CD8-positive, alpha-beta T cell (primary cell): ENCODE measurements at regions of chr16 and their contacts with region 1.

Region 1: DNA sequence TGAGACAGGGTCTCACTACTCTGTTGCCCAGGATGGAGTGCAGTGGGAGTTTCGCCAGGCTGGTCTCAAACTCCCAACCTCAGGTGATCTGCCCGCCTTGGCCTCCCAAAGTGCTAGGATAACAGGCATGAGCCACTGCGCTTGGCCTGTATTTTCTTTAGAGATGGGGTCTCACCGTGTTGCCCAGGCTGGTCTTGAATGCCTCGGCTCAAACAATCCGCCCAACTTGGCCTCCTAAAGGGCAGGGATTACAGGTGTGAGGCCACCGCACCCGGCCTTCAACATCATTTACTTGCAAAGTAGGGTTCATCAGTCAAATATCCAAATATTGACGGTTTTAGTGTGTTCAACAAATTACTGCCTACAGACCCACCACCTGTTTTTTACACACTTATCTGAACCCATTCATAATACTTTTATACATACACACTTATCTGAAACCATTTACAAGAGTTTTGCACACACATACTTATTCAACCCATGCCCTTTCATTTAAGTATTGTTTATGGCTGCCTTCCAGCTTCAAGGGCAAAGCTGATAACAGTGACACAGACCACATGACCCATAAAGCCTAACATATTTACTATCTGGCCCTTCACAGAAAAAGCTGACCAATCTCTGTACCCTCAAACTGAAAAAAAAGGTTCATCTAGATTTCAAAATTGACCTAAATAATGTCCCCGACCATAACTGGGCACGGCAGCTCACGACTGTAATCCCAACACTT is 11.9 kb downstream of the TMEM170A start:
- DNase-seq: no peak
- ATAC-seq: no peak
- H3K4me3 ChIP-seq: no peak overlapping the region
- H3K4me3 Mint-ChIP-seq: no peak overlapping the region
- H3K27ac ChIP-seq: no peak overlapping the region
- H3K27ac Mint-ChIP-seq: no peak overlapping the region
- H3K4me1 ChIP-seq: no peaks in the 10 kb centered on the region
- H3K4me1 Mint-ChIP-seq: peaks cover 47% of the 10 kb centered on the region
- H3K27me3 ChIP-seq: no peaks in the 10 kb centered on the region
- H3K27me3 Mint-ChIP-seq: no peaks in the 10 kb centered on the region
- CTCF ChIP-seq: no peak

Region 2: DNA sequence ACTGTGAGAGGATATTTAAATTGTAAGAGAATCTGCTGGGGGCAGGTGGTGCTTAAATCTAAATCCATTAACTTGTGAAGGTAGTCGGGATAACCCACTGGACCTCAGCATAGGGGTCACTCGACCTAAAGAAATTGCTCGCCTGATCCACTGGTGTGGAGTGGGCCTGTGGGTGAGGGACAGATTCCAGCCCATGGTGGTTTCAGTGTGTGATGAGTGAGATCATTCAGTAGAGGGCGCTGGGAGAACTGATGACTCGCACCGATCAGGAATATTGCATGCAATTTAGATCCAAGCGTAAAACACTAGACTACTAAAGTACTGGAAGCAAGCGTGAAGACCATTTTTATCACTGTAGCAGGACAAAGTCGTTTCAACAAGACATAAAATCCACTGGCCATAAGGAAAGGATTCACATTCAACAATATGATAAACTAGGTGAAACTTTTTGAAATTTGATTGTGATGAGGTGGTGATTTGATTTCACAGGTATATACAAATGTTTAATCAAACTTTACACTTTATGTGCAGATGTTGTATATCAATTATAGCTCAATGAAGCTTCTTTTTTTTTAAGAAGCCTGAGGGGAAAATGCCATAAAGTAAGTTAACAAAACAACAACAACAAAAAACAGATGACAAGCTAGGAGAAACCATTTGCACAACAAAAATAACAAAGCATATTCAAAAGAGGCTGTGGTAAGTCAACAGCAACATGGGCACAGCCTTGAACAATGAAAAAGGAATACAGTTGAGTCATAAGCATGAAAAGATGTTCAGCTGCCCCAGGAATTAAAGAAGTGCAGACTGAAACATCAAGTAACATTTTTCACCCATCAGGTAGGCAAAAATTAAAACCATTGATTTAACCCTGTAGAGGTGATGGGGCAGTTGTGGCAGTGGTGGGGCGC is 19.4 kb after region 1 on chr16:
- CTCF ChIA-PET with region 1: interaction called, 13 read pairs
- POLR2A ChIA-PET with region 1: no interaction called
- intact Hi-C with region 1: no loop called
- DNase-seq: peak in 7 of 9 experiments; percentile 17 to 71 (median 47)
- ATAC-seq: peak; percentile 83
- H3K4me3 ChIP-seq: no peak overlapping the region
- H3K4me3 Mint-ChIP-seq: no peak overlapping the region
- H3K27ac ChIP-seq: no peak overlapping the region
- H3K27ac Mint-ChIP-seq: no peak overlapping the region
- H3K4me1 ChIP-seq: no peaks in the 10 kb centered on the region
- H3K4me1 Mint-ChIP-seq: no peaks in the 10 kb centered on the region
- H3K27me3 ChIP-seq: no peaks in the 10 kb centered on the region
- H3K27me3 Mint-ChIP-seq: peaks cover 6% of the 10 kb centered on the region
- CTCF ChIP-seq: peak; percentile 54